ENCODE measurements at regions of chr11 and their contacts with region 1.

Region 1: GRCh38 chr11:33753304-33753967 is 17.2 kb upstream of the CD59 start:
- DNase-seq: peak; percentile 88
- ATAC-seq: peak; percentile 95
- H3K4me3 ChIP-seq: no peak overlapping the region
- H3K27ac ChIP-seq: no peak overlapping the region
- H3K4me1 ChIP-seq: peaks cover 3% of the 10 kb centered on the region; the same call in 1 of the 2 replicates
- H3K27me3 ChIP-seq: no peaks in the 10 kb centered on the region
- CTCF ChIP-seq: no peak
- POLR2A ChIP-seq: no peak
- RAD21 ChIP-seq: no peak

Region 2: GRCh38 chr11:33379947-33380346 is 373.5 kb before region 1 on chr11:
- CTCF ChIA-PET with region 1: interaction called, 10 read pairs
- POLR2A ChIA-PET with region 1: no interaction called
- dilution Hi-C with region 1: no loop called
- in situ Hi-C with region 1: no loop called
- intact Hi-C with region 1: no loop called
- DNase-seq: no peak
- ATAC-seq: no peak
- H3K4me3 ChIP-seq: no peak overlapping the region
- H3K27ac ChIP-seq: no peak overlapping the region
- H3K4me1 ChIP-seq: no peaks in the 10 kb centered on the region
- H3K27me3 ChIP-seq: peaks cover 2% of the 10 kb centered on the region; the same call in 1 of the 2 replicates
- CTCF ChIP-seq: no peak
- POLR2A ChIP-seq: no peak
- RAD21 ChIP-seq: no peak

Measured in IMR-90 (cell line).